BJ (cell line): ENCODE measurements at regions of chr3 and their contacts with region 1.

Region 1: DNA sequence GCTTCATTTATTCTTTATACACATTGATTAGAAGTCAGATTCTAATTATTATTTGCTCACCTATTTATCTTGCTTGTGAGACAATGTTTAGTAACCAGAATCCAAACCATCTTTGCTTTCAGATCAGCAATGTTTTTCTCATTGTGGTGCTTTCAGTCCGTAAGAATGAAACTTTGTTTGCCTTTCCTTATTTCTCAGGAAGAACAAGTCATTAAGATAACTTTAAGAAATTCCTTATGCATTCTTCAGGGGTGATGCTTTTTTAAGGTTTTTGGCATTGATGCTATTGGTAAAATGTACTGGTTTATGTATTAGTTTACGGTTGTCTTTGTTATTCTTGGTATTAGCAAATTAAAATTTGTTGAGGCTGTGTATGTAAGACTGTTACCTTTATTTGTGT is 120.8 kb upstream of the POU1F1 start:
- DNase-seq: no peak
- H3K4me3 ChIP-seq: no peak overlapping the region
- H3K27me3 ChIP-seq: no peaks in the 10 kb centered on the region
- CTCF ChIP-seq: no peak

Region 2: GRCh38 chr3:87380761-87381160 is 16.4 kb before region 1 on chr3:
- CTCF ChIA-PET with region 1: no interaction called
- POLR2A ChIA-PET with region 1: interaction called, 10 read pairs
- DNase-seq: no peak
- H3K4me3 ChIP-seq: no peak overlapping the region
- H3K27me3 ChIP-seq: no peaks in the 10 kb centered on the region
- CTCF ChIP-seq: no peak